PC-3 (cell line): ENCODE measurements at regions of chr5 and their contacts with region 1.

Region 1: DNA sequence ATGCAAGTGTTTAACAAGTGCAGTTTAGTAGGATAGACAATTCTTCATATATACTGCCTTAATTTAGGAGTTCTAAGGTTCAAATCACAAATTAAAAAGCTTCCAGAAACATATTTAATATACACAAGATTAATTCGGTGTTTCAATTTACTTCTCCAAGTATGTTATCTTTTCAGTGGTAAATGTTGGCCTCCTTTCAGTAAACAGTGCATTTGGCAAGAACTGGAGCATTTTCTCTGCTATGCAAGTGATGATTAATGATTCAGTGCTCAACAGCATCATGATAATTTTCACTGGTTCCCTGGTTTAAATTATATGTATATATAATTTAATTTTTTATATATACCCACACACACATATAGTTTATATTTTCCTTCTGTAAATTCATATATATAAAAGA is 541.7 kb downstream of the EFNA5 start:
- DNase-seq: peak; percentile 4
- ATAC-seq: no peak
- H3K4me3 ChIP-seq: no peak overlapping the region
- H3K27ac ChIP-seq: no peak overlapping the region
- H3K4me1 ChIP-seq: peaks cover 18% of the 10 kb centered on the region
- H3K27me3 ChIP-seq: no peaks in the 10 kb centered on the region
- CTCF ChIP-seq: no peak

Region 2: GRCh38 chr5:106964132-106964531 is 164.9 kb before region 1 on chr5:
- CTCF ChIA-PET with region 1: no interaction called
- POLR2A ChIA-PET with region 1: no interaction called
- intact Hi-C with region 1: loop called (anchors 5 kb)
- DNase-seq: peak; percentile 82
- ATAC-seq: peak; percentile 90
- H3K4me3 ChIP-seq: no peak overlapping the region
- H3K27ac ChIP-seq: no peak overlapping the region
- H3K4me1 ChIP-seq: peaks cover 44% of the 10 kb centered on the region
- H3K27me3 ChIP-seq: no peaks in the 10 kb centered on the region
- CTCF ChIP-seq: no peak